Breast epithelium (tissue), 4 donors: ENCODE measurements at regions of chr5 and their contacts with region 1.

Region 1: DNA sequence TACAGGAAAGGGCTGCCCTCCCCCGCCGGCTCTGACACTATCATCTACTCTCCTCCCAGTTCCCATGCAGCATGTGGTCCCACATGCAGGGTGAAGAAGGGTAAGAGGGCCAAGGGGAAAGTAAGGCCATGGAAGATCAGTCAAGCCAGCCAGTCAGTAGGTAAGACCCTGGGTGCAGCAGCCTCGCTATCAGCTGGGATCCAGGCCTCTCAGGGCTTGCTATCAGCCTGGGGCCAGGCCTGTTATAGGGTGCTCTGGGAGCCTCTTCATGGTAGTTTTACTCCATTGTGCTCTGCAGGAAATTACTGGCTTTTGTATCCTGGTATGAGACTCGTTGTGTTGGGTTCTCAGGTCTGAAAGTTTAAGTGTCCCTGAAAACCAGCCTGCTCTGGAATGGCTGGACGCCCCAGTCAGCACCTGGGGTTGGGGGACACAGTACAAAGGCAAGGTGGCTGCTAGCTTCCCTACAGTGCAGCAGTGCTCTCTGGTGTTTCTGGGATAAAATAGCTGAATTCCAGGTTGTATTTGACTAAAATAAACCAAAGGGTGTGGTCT is 21.4 kb downstream of the SLC22A4 start:
- DNase-seq: no peak
- H3K4me3 ChIP-seq: no peak overlapping the region
- H3K27ac ChIP-seq: no peak overlapping the region
- H3K4me1 ChIP-seq: no peaks in the 10 kb centered on the region
- H3K27me3 ChIP-seq: no peaks in the 10 kb centered on the region
- CTCF ChIP-seq: no peak
- POLR2A ChIP-seq: no peak

Region 2: GRCh38 chr5:132293992-132294727 is 21.4 kb before region 1 on chr5 and contains the start of gene SLC22A4:
- intact Hi-C with region 1: loop called (anchors 1 kb)
- DNase-seq: peak; percentile 89 to 90
- H3K4me3 ChIP-seq: peak within 1 kb of the TSS; percentile 53 to 82 (median 74)
- H3K27ac ChIP-seq: peak within 1 kb of the TSS; percentile 95 to 100
- H3K4me1 ChIP-seq: no peaks in the 10 kb centered on the region
- H3K27me3 ChIP-seq: no peaks in the 10 kb centered on the region
- CTCF ChIP-seq: no peak
- POLR2A ChIP-seq: peak; percentile 85
- total RNA-seq, gene SLC22A4: 1.3 to 4.5 (median 2.3) TPM